CD14-positive monocyte (primary cell): ENCODE measurements at regions of chr1 and their contacts with region 1.

Region 1: DNA sequence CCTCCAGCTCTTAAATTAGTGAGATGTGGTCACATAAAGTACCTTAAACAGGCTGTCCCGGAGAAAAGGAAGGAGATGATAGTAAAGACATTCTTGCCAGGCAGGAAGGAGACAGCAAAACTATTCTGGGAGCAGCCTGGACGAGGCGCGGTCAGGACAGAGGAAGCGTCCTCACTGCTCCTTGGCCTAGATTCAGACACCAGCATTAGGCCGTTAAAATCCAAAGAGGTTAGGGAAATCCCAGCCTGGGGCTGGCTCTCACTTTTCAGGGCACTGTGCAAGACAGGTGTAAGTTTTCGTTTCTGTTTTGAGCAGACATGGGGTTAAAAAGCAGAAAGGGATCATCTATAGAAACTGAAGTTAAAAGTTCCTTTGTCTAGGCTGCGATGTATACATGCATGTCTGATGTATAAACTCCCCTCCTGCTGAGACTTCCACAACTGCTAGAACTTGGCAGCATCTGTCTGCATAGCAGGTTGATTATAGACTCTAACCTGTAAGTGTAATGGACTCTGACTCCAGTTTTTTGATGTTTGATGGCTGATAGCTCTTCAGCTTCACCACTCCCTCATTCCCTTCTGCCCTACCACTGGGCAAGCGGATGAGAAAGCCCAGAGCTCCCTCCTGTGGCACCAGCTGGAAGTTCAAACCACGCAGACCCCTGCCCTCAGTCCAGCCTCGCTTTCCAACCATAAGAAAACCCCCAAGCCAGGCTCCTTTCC is 21.5 kb downstream of the STPG1 start:
- DNase-seq: peak; percentile 26 to 55 (median 45)
- H3K4me3 ChIP-seq: peak overlapping the region in 1 of 3 experiments; percentile 23
- H3K4me3 Mint-ChIP-seq: peak overlapping the region; percentile 41 to 74
- H3K27ac ChIP-seq: no peak overlapping the region
- H3K27ac Mint-ChIP-seq: peak overlapping the region in 3 of 7 donors; percentile 35 to 81 (median 75)
- H3K4me1 ChIP-seq: no peaks in the 10 kb centered on the region
- H3K4me1 Mint-ChIP-seq: peaks cover 12% of the 10 kb centered on the region
- H3K27me3 ChIP-seq: no peaks in the 10 kb centered on the region
- H3K27me3 Mint-ChIP-seq: peaks cover 0 to 2% (median 0%) of the 10 kb centered on the region in 3 donors
- CTCF ChIP-seq: peak; percentile 75

Region 2: GRCh38 chr1:24070821-24071393 is 321.1 kb before region 1 on chr1:
- intact Hi-C with region 1: loop called (anchors 5 to 10 kb)
- DNase-seq: peak; percentile 44 to 62 (median 51)
- H3K4me3 ChIP-seq: no peak overlapping the region
- H3K4me3 Mint-ChIP-seq: no peak overlapping the region
- H3K27ac ChIP-seq: no peak overlapping the region
- H3K27ac Mint-ChIP-seq: no peak overlapping the region
- H3K4me1 ChIP-seq: peaks cover 3 to 16% of the 10 kb centered on the region in 2 donors
- H3K4me1 Mint-ChIP-seq: peaks cover 20% of the 10 kb centered on the region
- H3K27me3 ChIP-seq: no peaks in the 10 kb centered on the region
- H3K27me3 Mint-ChIP-seq: peaks cover 3 to 6% (median 5%) of the 10 kb centered on the region in 3 donors
- CTCF ChIP-seq: peak; percentile 85

Region 3: GRCh38 chr1:24150234-24151174 is 241.5 kb before region 1 on chr1:
- intact Hi-C with region 1: loop called in 1 of 2 experiments (anchors 1 kb)
- DNase-seq: peak; percentile 66 to 77 (median 70)
- H3K4me3 ChIP-seq: no peak overlapping the region
- H3K4me3 Mint-ChIP-seq: peak overlapping the region; percentile 25 to 88
- H3K27ac ChIP-seq: no peak overlapping the region
- H3K27ac Mint-ChIP-seq: peak overlapping the region in 4 of 7 donors; percentile 37 to 84 (median 59)
- H3K4me1 ChIP-seq: peaks cover 10% of the 10 kb centered on the region in 2 donors
- H3K4me1 Mint-ChIP-seq: peaks cover 14% of the 10 kb centered on the region
- H3K27me3 ChIP-seq: peaks cover 13 to 33% of the 10 kb centered on the region in 2 donors
- H3K27me3 Mint-ChIP-seq: peaks cover 43 to 55% (median 43%) of the 10 kb centered on the region in 3 donors
- CTCF ChIP-seq: peak; percentile 96

Region 4: DNA sequence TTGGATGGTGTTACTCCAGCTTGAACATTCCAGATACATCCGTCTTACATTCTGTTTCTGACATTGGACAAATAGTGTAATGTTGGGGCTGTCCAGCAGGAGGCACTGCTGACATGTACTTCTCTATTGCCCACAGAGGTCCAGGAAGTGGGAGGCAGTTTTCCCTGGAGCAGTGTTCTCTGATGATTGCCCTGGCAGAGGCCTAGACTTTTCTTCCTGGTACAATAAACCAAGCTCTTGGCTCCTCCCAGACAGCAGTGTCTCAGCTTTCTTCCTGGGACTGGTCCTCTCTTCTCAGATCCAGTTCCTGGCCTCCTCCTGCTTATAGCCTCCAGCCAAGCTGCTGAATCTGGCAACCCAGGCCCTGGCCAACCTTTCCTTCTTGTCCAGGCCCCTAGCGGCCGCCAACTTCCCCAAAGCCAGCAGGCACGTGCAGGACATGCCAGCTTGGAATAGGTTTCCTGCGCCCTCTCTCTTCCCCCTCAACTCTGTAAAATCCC is 190.1 kb before region 1 on chr1:
- intact Hi-C with region 1: loop called (anchors 1 to 2 kb)
- DNase-seq: peak; percentile 32 to 65 (median 53)
- H3K4me3 ChIP-seq: no peak overlapping the region
- H3K4me3 Mint-ChIP-seq: no peak overlapping the region
- H3K27ac ChIP-seq: no peak overlapping the region
- H3K27ac Mint-ChIP-seq: no peak overlapping the region
- H3K4me1 ChIP-seq: peaks cover 18 to 19% of the 10 kb centered on the region in 2 donors
- H3K4me1 Mint-ChIP-seq: peaks cover 17% of the 10 kb centered on the region
- H3K27me3 ChIP-seq: no peaks in the 10 kb centered on the region
- H3K27me3 Mint-ChIP-seq: peaks cover 4 to 6% (median 6%) of the 10 kb centered on the region in 3 donors
- CTCF ChIP-seq: peak; percentile 85

Region 5: GRCh38 chr1:24329797-24330543 is 62.1 kb before region 1 on chr1:
- intact Hi-C with region 1: loop called in 1 of 2 experiments (anchors 5 kb)
- DNase-seq: no peak
- H3K4me3 ChIP-seq: no peak overlapping the region
- H3K4me3 Mint-ChIP-seq: no peak overlapping the region
- H3K27ac ChIP-seq: no peak overlapping the region
- H3K27ac Mint-ChIP-seq: no peak overlapping the region
- H3K4me1 ChIP-seq: no peaks in the 10 kb centered on the region
- H3K4me1 Mint-ChIP-seq: no peaks in the 10 kb centered on the region
- H3K27me3 ChIP-seq: peaks cover 7 to 25% of the 10 kb centered on the region in 2 donors
- H3K27me3 Mint-ChIP-seq: peaks cover 11 to 28% (median 14%) of the 10 kb centered on the region in 3 donors
- CTCF ChIP-seq: no peak

Region 6: DNA sequence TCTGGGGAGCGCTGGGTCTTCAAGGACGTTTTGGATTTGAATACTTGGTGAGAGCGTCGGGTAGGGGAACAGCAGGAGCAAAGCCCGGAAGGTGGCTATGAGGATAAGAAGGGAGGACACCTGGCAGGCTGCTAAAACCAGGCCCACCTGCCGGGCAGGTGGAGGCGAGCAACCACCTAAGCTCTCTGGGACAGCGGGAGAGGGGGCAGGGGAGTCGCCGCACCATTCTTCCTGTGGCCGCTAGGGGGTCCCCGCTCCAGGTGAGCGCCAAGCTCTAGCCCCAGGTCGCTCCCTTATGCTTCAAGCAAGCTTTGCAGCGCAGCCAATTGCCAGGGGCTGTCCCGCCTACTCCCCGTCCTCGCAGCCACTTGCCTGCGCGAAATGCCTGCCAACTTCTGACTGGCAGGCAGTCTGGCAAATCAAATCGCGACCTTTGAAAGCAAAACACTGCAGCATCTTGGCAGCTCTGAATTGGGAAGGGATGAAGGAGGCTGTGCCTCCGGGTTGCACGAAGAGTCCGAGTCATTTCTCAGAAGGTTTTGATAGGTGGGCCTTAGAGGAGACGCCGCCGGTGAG is 23.4 kb after region 1 on chr1 and contains the start of gene NIPAL3:
- intact Hi-C with region 1: no loop called
- DNase-seq: peak; percentile 96 to 97 (median 96)
- H3K4me3 ChIP-seq: peak within 1 kb of the TSS; percentile 58 to 95 (median 73)
- H3K4me3 Mint-ChIP-seq: peak within 1 kb of the TSS; percentile 97 to 99
- H3K27ac ChIP-seq: peak within 1 kb of the TSS in 1 of 2 donors; percentile 79
- H3K27ac Mint-ChIP-seq: peak within 1 kb of the TSS; percentile 75 to 90 (median 83)
- H3K4me1 ChIP-seq: peaks cover 40 to 61% of the 10 kb centered on the region in 2 donors
- H3K4me1 Mint-ChIP-seq: peaks cover 65% of the 10 kb centered on the region
- H3K27me3 ChIP-seq: no peaks in the 10 kb centered on the region
- H3K27me3 Mint-ChIP-seq: peaks cover 0 to 6% (median 0%) of the 10 kb centered on the region in 3 donors
- CTCF ChIP-seq: peak; percentile 63
- polyA plus RNA-seq, gene NIPAL3: 5.9 to 9.6 (median 6.6) TPM

Region 7: GRCh38 chr1:24438423-24438901 is 46.4 kb after region 1 on chr1:
- intact Hi-C with region 1: no loop called
- DNase-seq: no peak
- H3K4me3 ChIP-seq: no peak overlapping the region
- H3K4me3 Mint-ChIP-seq: no peak overlapping the region
- H3K27ac ChIP-seq: no peak overlapping the region
- H3K27ac Mint-ChIP-seq: peak overlapping the region in 2 of 7 donors; percentile 50 to 63
- H3K4me1 ChIP-seq: no peaks in the 10 kb centered on the region
- H3K4me1 Mint-ChIP-seq: no peaks in the 10 kb centered on the region
- H3K27me3 ChIP-seq: no peaks in the 10 kb centered on the region
- H3K27me3 Mint-ChIP-seq: peaks cover 0 to 1% (median 0%) of the 10 kb centered on the region in 3 donors
- CTCF ChIP-seq: no peak

Region 8: DNA sequence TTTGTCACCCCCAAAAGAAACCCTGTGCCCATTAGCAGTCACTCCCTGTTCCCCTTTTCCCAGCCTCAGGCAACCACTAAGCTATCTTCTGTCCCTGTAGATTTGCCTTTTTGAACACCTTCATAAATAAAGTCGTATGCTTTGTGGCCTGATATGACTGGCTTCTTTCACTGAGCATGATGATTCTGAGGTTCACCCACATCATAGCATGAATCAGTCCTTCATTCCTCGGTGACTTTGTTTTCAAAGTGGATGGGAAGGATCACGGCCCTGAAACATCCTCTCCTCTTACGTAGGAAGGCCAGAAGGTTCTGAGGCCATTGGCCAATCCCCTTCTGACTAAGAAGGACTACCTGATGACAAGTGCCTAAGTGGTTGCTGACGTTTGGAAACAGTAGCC is 62.6 kb after region 1 on chr1:
- intact Hi-C with region 1: no loop called
- DNase-seq: peak in 2 of 3 donors; percentile 50 to 69
- H3K4me3 ChIP-seq: no peak overlapping the region
- H3K4me3 Mint-ChIP-seq: no peak overlapping the region
- H3K27ac ChIP-seq: peak overlapping the region in 1 of 2 donors; percentile 72
- H3K27ac Mint-ChIP-seq: peak overlapping the region in 5 of 7 donors; percentile 32 to 87 (median 62)
- H3K4me1 ChIP-seq: peaks cover 12 to 21% of the 10 kb centered on the region in 2 donors
- H3K4me1 Mint-ChIP-seq: peaks cover 23% of the 10 kb centered on the region
- H3K27me3 ChIP-seq: no peaks in the 10 kb centered on the region
- H3K27me3 Mint-ChIP-seq: no peaks in the 10 kb centered on the region
- CTCF ChIP-seq: no peak